ENCODE measurements at regions of chr4 and their contacts with region 1.

Region 1: DNA sequence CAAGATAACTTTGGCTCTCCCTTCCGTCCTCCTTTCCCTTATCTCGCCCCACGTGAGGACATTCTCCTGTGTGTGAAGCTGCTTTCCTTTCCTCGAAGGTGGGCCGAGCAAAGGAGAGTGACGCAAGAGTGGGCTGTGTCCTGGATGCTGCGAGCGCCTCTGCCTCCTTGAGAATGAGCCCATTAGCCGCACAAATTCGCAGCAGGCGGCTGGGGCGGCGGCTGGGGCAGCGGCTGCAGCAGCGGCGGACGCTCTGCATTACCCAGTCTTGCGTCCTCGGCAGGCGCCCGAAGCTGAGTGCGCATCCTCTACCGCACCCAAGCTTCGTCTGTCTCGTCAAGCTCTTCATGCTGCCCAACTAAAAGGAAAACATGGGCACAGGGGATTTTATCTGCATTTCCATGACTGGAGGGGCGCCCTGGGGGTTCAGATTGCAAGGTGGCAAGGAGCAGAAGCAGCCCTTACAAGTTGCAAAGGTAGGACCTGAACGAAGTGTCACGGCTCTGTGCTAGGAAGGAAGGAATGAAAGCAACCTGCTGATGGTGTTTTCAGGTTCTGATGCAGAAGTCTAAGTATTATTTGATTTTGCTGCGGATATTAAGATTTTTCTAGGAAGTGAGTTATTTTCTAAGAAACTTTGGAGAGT is at the start of gene SYNPO2:
- DNase-seq: peak; percentile 35 to 95 (median 68)

Region 2: GRCh38 chr4:118740869-118741268 is 147.9 kb before region 1 on chr4:
- intact Hi-C with region 1: loop called (anchors 2 kb)
- DNase-seq: no peak

Region 3: GRCh38 chr4:118772081-118772766 is 116.6 kb before region 1 on chr4:
- intact Hi-C with region 1: loop called (anchors 2 kb)
- DNase-seq: no peak